A549 (cell line): ENCODE measurements at regions of chr1 and their contacts with region 1.

Region 1: DNA sequence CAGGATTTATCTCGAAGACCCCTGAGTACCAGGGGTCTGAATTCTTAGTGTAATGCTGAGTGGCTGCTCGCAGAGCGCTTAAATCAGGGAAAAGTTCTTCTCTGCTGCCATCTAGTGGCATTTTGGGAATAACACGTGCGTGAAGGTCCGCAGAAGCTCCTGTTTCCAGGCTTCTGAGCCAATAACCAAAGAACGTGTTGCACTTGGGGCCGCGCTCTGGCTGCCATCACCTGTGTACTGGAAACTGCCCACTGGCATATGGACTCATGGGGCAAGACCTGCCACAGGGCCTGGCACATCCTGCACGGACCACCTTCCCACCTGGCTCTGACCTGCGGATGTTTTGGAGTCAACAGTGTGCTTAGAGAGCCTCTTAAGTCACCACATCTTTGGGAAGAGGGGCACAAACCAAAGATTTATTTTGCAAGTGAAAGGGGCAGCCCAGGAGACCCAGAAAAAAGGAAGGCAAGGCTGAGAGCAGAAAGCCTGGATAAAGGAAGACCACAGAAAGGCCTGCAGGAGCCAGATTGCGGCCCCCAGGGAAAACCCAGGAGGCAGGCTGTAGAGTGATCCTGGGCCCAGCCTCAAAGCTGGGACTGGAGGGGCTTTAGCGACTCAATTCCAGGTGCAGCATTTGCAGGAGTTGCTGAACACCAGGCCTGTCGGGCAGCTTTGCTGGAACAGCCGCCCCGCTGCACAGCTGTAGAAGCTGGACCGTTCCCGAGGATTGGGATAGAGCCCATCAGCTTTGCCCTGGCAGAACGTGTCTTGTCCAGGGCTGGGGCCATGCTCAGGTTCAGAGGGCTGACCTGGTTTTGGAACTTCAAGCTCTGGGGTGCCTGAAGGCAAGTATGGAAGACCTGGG is 13.0 kb downstream of the CHIT1 start:
- DNase-seq: peak; percentile 60 to 65
- ATAC-seq: peak; percentile 75 to 92
- H3K4me3 ChIP-seq: no peak overlapping the region
- H3K27ac ChIP-seq: no peak overlapping the region
- H3K4me1 ChIP-seq: no peaks in the 10 kb centered on the region
- CTCF ChIP-seq: peak; percentile 90
- EP300 ChIP-seq: no peak
- POLR2A ChIP-seq: no peak
- RAD21 ChIP-seq: peak; percentile 84 to 92

Region 2: DNA sequence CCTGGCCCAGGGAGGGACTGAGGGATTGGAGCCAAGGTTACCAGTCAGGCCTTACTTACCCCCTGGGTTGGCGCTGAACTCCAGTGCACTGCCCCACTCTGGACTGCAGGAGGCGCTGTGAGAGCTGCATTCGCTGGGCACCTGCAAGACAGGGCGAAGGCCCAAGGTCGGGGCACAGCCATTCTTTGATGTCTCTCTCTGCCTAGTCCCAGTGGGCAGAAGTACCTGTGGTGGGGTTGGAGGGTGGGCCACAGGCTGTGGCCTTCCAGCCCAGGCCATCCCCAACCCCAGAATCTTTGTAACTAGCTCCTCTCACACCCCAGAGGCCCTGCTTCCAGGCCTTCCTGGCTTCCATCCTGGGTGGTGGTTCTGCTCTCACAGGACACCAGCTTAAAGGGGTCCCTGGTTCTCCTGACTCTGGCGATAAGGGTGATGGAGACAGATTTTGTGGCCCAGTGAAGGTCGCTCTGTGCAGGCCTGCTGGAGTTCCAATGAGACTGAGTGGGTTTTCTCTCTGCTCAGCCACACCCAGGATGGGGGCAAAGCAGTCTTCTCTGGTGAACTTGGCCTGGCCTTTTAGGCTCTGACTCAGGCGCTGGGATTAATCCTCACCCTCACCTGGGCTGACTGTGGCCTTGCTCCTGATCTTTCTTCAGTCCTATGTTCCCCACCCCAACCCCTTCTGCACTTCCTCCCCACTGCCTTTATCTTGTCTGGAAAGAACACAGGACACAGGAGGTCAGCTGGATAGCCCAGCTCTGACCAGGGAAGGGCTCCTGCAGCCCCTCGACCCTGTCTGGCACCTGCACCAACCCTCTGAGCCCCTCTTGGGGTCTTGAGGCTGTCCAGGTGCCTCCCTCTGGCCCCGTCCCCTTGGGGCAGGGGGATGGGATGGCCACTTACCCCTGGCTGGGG is 131.7 kb before region 1 on chr1:
- CTCF ChIA-PET with region 1: interaction called, 14 read pairs
- POLR2A ChIA-PET with region 1: no interaction called
- DNase-seq: peak in 1 of 2 experiments; percentile 39
- ATAC-seq: peak in 1 of 2 experiments; percentile 66; a peak in 3 of 6 replicates
- H3K4me3 ChIP-seq: no peak overlapping the region
- H3K27ac ChIP-seq: no peak overlapping the region
- H3K4me1 ChIP-seq: 0 out of 3 replicates have a peak, but pooled peaks cover 7% of the 10 kb centered on the region
- CTCF ChIP-seq: peak; percentile 26; the same call in 2 of the 3 replicates
- EP300 ChIP-seq: no peak
- POLR2A ChIP-seq: no peak
- RAD21 ChIP-seq: peak in 1 of 2 experiments; percentile 23; a peak in 2 of 5 replicates

Region 3: GRCh38 chr1:203117611-203118575 is 98.6 kb before region 1 on chr1:
- CTCF ChIA-PET with region 1: interaction called, 292 read pairs
- POLR2A ChIA-PET with region 1: interaction called, 4 read pairs
- DNase-seq: peak; percentile 63 to 93
- ATAC-seq: peak; percentile 91 to 99
- H3K4me3 ChIP-seq: no peak overlapping the region
- H3K27ac ChIP-seq: no peak overlapping the region
- H3K4me1 ChIP-seq: 0 out of 3 replicates have a peak, but pooled peaks cover 4% of the 10 kb centered on the region
- CTCF ChIP-seq: peak; percentile 81
- EP300 ChIP-seq: no peak
- POLR2A ChIP-seq: no peak
- RAD21 ChIP-seq: peak; percentile 87 to 94

Region 4: DNA sequence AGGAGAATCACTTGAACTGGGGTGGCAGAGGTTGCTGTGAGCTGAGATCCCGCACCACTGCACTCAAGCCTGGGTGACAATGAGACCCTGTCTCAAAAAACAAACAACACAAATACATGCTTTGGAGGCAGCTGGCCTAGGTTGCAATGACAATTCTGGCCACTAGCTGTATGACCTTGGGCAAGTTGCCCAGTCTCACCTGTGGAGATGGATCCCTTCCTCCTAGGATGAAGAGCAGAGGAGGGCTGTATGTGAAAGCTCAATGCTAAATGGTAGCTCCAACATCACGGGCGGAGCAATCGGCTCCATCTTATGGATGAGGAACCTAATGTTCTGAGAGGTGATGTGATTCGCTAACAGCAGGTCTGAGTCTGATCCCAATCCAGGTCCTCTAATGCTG is 68.4 kb before region 1 on chr1:
- CTCF ChIA-PET with region 1: interaction called, 13 read pairs
- POLR2A ChIA-PET with region 1: no interaction called
- DNase-seq: peak in 1 of 2 experiments; percentile 38
- ATAC-seq: peak in 1 of 2 experiments; percentile 48; a peak in 3 of 6 replicates
- H3K4me3 ChIP-seq: no peak overlapping the region
- H3K27ac ChIP-seq: no peak overlapping the region
- H3K4me1 ChIP-seq: peaks cover 13% of the 10 kb centered on the region
- CTCF ChIP-seq: 0 out of 3 replicates have a peak, but pooled peaks have one; percentile 5
- EP300 ChIP-seq: no peak
- POLR2A ChIP-seq: no peak
- RAD21 ChIP-seq: no peak

Region 5: DNA sequence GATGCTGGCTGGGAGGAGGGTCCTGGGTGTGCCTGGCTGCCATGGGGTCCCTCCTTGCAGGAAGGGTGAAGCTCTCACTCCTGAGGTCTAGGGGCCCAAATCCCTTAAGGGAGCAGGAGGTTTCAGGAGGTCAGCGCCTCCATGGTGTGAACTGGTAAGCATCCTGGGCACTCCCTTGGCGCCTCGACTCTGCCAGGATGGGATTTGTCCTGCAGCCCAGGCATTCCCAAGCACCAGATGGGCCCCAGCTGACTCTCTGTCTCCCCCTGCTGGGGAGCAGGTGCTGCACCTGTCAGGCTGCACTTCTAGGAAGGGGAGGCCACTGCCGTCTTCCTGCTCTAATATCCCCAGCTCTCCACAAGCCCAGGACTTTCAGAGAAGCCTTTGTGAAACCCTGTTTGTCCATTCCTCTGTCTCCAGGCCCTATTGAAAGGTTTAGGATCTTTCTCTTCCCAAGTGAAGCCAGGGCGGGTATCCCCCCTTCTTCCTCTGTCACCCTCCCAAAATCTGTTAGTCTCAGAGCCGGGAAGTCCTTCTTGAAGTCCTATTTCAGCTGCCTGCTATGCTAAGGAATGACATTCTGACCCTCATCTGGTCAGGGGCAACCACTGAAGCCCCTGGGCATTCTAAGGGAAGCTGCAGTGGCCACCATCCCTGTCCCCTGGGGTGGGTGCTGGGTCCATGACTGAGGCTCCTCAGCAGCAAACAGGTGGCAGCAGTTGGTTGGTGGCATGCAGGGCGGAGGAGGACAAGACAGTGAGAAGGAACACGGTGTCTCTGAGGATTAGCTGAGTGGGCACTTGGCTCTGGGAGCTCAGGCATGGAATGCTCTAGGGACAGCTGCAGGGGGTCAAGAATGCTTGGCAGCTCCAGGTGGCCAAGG is 44.1 kb before region 1 on chr1:
- CTCF ChIA-PET with region 1: interaction called, 83 read pairs
- POLR2A ChIA-PET with region 1: no interaction called
- DNase-seq: peak; percentile 67 to 78
- ATAC-seq: peak; percentile 67 to 93
- H3K4me3 ChIP-seq: no peak overlapping the region
- H3K27ac ChIP-seq: no peak overlapping the region
- H3K4me1 ChIP-seq: peaks cover 18% of the 10 kb centered on the region
- CTCF ChIP-seq: peak; percentile 78
- EP300 ChIP-seq: no peak
- POLR2A ChIP-seq: no peak
- RAD21 ChIP-seq: peak; percentile 61 to 68

Region 6: GRCh38 chr1:203229471-203230135 is 13.1 kb after region 1 on chr1 and contains the start of gene CHIT1:
- CTCF ChIA-PET with region 1: interaction called, 68 read pairs
- POLR2A ChIA-PET with region 1: no interaction called
- DNase-seq: no peak
- ATAC-seq: no peak
- H3K4me3 ChIP-seq: no peak within 1 kb of the TSS
- H3K27ac ChIP-seq: no peak within 1 kb of the TSS
- H3K4me1 ChIP-seq: no peaks in the 10 kb centered on the region
- CTCF ChIP-seq: no peak
- EP300 ChIP-seq: no peak
- POLR2A ChIP-seq: no peak
- RAD21 ChIP-seq: no peak
- polyA plus RNA-seq, gene CHIT1: not detected in 2 replicates

Region 7: GRCh38 chr1:203278082-203278884 is 61.8 kb after region 1 on chr1:
- CTCF ChIA-PET with region 1: no interaction called
- POLR2A ChIA-PET with region 1: no interaction called
- DNase-seq: no peak
- ATAC-seq: peak in 1 of 2 experiments; percentile 20; a peak in 3 of 6 replicates
- H3K4me3 ChIP-seq: no peak overlapping the region
- H3K27ac ChIP-seq: no peak overlapping the region
- H3K4me1 ChIP-seq: peaks cover 12% of the 10 kb centered on the region
- CTCF ChIP-seq: no peak
- EP300 ChIP-seq: no peak
- POLR2A ChIP-seq: no peak
- RAD21 ChIP-seq: no peak

Region 8: GRCh38 chr1:203673550-203674427 is 457.3 kb after region 1 on chr1:
- CTCF ChIA-PET with region 1: no interaction called
- POLR2A ChIA-PET with region 1: no interaction called
- DNase-seq: peak; percentile 85 to 87
- ATAC-seq: peak; percentile 92 to 93
- H3K4me3 ChIP-seq: no peak overlapping the region
- H3K27ac ChIP-seq: peak overlapping the region; percentile 49 to 80
- H3K4me1 ChIP-seq: peaks cover 36% of the 10 kb centered on the region
- CTCF ChIP-seq: peak; percentile 38; the same call in 2 of the 3 replicates
- EP300 ChIP-seq: no peak
- POLR2A ChIP-seq: no peak
- RAD21 ChIP-seq: peak; percentile 52 to 55